Activated CD8-positive, alpha-beta T cell treated with anti-CD3 and anti-CD28 coated beads for 36 hours (primary cell): ENCODE measurements at regions of chr14 and their contacts with region 1.

Region 1: DNA sequence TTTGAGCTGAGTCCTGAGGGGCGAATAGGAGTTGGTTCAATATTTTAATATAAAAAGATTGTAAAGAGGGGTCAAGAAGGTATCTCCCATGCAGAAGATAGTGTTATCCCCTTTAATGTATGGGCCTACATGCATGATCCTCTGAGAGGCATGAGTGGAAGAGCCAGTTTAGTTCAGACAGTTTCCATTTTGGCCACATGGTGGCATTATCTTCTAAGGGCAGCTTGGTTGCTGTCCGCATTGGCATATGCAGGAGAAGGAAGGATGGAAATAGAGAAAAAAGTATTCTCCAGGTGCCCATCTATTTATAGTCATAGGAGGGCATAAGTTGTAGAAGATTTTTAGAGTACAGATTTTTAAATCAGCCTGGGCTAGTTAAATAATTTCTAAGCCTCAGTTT is 5.4 kb downstream of the SAMD4A start:
- DNase-seq: peak; percentile 57
- ATAC-seq: no peak
- H3K4me3 Mint-ChIP-seq: no peak overlapping the region
- H3K27ac Mint-ChIP-seq: no peak overlapping the region
- H3K4me1 Mint-ChIP-seq: peaks cover 11% of the 10 kb centered on the region
- H3K27me3 Mint-ChIP-seq: peaks cover 36% of the 10 kb centered on the region
- CTCF ChIP-seq: peak; percentile 72

Region 2: DNA sequence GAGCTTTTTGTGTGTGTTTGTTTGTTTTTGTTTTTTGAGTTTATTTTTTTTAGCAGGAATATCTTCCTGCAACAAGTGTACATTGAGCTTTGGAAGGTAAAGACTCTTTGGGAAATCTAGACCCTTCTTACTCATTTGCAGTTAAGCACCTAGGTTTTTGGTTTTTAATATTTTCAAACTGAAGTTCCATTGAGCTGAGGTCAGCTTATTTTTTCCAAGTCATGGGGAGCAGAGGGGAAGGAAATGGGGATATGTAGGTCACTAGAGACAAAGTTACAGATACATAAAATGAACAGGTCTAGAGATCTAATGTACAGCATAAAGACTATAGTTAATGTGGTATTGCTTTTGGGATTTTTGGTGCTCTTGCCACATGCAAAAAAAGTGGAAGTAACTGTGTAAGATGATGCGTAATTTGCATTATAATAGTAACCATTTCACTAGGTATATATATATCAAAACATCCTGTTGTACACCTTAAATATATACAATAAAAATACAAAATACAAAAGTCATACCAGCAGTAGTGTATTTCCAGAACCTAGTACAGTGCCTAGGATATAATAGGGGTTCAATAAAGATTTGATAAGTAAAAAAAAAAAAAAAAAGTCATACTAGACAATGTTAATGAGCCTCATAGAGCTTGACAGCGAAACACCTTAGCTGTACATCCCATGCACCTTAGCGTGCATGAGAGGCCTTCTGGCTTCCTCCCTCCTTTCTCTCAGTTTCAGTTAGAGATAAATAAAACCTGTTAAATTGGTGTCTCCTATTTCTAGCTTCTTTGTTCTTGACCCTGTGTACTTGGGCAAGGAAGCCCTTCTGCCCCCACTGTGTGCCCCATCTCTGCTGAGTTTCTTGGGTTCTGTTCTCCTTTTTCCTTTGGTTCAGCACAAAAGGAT is 40.0 kb before region 1 on chr14:
- CTCF ChIA-PET with region 1: no interaction called
- POLR2A ChIA-PET with region 1: no interaction called
- intact Hi-C with region 1: no loop called
- DNase-seq: no peak
- ATAC-seq: no peak
- H3K4me3 Mint-ChIP-seq: no peak overlapping the region
- H3K27ac Mint-ChIP-seq: no peak overlapping the region
- H3K4me1 Mint-ChIP-seq: peaks cover 2% of the 10 kb centered on the region
- H3K27me3 Mint-ChIP-seq: no peaks in the 10 kb centered on the region
- CTCF ChIP-seq: no peak

Region 3: GRCh38 chr14:54691525-54692283 is 119.4 kb after region 1 on chr14:
- CTCF ChIA-PET with region 1: interaction called, 4 read pairs
- POLR2A ChIA-PET with region 1: interaction called, 3 read pairs
- intact Hi-C with region 1: loop called (anchors 5 kb)
- DNase-seq: peak; percentile 70
- ATAC-seq: peak; percentile 64
- H3K4me3 Mint-ChIP-seq: no peak overlapping the region
- H3K27ac Mint-ChIP-seq: no peak overlapping the region
- H3K4me1 Mint-ChIP-seq: peaks cover 24% of the 10 kb centered on the region
- H3K27me3 Mint-ChIP-seq: peaks cover 30% of the 10 kb centered on the region
- CTCF ChIP-seq: peak; percentile 76